ENCODE measurements at regions of chr20 and their contacts with region 1.

Region 1: GRCh38 chr20:44609511-44610312 is 27.3 kb downstream of the PKIG start:
- DNase-seq: peak; percentile 83 to 92 (median 88)
- H3K4me3 ChIP-seq: peak overlapping the region in 57 of 59 donors; percentile 0 to 65 (median 42)
- H3K27ac ChIP-seq: peak overlapping the region in 58 of 59 donors; percentile 33 to 93 (median 82)
- H3K27me3 ChIP-seq: no peaks in the 10 kb centered on the region
- CTCF ChIP-seq: peak; percentile 91 to 100 (median 98)

Region 2: GRCh38 chr20:44210422-44211176 is 399.1 kb before region 1 on chr20 and contains the start of gene OSER1:
- intact Hi-C with region 1: loop called (anchors 5 kb)
- DNase-seq: peak; percentile 95 to 98 (median 97)
- H3K4me3 ChIP-seq: peak within 1 kb of the TSS; percentile 75 to 100 (median 96)
- H3K27ac ChIP-seq: peak within 1 kb of the TSS; percentile 67 to 98 (median 92)
- H3K27me3 ChIP-seq: no peaks in the 10 kb centered on the region
- CTCF ChIP-seq: peak in 34 of 56 donors; percentile 7 to 51 (median 30)
- total RNA-seq, gene OSER1: 20.8 to 41.9 (median 29.8) TPM

Region 3: GRCh38 chr20:44388466-44389023 is 221.2 kb before region 1 on chr20:
- intact Hi-C with region 1: loop called (anchors 2 to 5 kb)
- DNase-seq: peak; percentile 18 to 84 (median 62)
- H3K4me3 ChIP-seq: peak overlapping the region in 4 of 59 donors; percentile 6 to 29 (median 22)
- H3K27ac ChIP-seq: no peak overlapping the region
- H3K27me3 ChIP-seq: peaks cover 0 to 17% (median 0%) of the 10 kb centered on the region in 45 donors
- CTCF ChIP-seq: peak; percentile 43 to 78 (median 64)

Region 4: DNA sequence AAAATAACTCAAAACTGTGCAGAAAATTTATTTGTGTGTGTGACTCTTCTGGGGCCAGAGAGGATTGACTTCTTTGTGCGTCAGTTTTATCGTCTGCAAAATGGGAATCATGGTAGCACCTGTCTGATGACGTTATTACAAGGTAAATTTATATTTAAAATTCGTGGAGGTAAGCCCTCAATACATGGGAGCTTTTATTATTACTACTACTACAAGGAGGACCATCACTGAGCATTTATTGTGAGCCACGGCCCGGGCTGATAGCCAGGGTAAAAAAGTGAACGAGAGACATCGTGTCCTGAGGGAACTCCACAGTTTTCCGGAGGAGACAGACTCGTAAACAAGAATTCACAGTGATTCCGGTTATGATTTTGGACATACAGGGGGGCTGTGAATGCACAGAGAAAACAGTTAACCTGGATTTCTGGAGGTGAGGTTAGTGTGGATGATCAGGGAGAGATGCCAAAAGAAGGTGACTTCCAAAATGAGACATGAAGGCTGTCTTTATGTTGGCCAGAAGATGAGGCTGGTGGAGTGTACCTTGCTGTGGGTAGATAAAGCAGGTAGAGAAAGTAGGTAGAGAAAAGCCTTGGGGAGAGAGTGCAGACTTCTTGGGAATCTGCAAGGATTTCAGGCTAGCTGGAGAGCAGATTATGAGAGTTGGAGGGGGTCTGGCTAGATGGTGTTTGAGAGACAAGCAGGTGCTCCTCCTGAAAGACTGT is 77.3 kb before region 1 on chr20:
- intact Hi-C with region 1: loop called (anchors 2 kb)
- DNase-seq: no peak
- H3K4me3 ChIP-seq: peak overlapping the region; percentile 66 to 99 (median 87)
- H3K27ac ChIP-seq: peak overlapping the region in 58 of 59 donors; percentile 33 to 94 (median 84)
- H3K27me3 ChIP-seq: no peaks in the 10 kb centered on the region
- CTCF ChIP-seq: no peak

Region 5: GRCh38 chr20:44642203-44643153 is 32.8 kb after region 1 on chr20:
- intact Hi-C with region 1: no loop called
- DNase-seq: peak in 7 of 10 donors; percentile 19 to 62 (median 53)
- H3K4me3 ChIP-seq: peak overlapping the region in 54 of 59 donors; percentile 4 to 61 (median 32)
- H3K27ac ChIP-seq: peak overlapping the region in 58 of 59 donors; percentile 2 to 89 (median 70)
- H3K27me3 ChIP-seq: no peaks in the 10 kb centered on the region
- CTCF ChIP-seq: no peak

Region 6: GRCh38 chr20:44683263-44684046 is 73.7 kb after region 1 on chr20:
- intact Hi-C with region 1: loop called in 1 of 2 experiments (anchors 2 kb)
- DNase-seq: peak in 7 of 10 donors; percentile 8 to 68 (median 55)
- H3K4me3 ChIP-seq: no peak overlapping the region
- H3K27ac ChIP-seq: peak overlapping the region in 6 of 59 donors; percentile 11 to 85 (median 70)
- H3K27me3 ChIP-seq: no peaks in the 10 kb centered on the region
- CTCF ChIP-seq: peak in 52 of 56 donors; percentile 34 to 81 (median 66)

Region 7: GRCh38 chr20:44849703-44850102 is 240.0 kb after region 1 on chr20:
- intact Hi-C with region 1: no loop called
- DNase-seq: no peak
- H3K4me3 ChIP-seq: no peak overlapping the region
- H3K27ac ChIP-seq: no peak overlapping the region
- H3K27me3 ChIP-seq: peaks cover 0 to 4% (median 0%) of the 10 kb centered on the region in 45 donors
- CTCF ChIP-seq: no peak